Activated naive CD4-positive, alpha-beta T cell treated with anti-CD3 and anti-CD28 coated beads for 36 hours (primary cell): ENCODE measurements at regions of chr11 and their contacts with region 1.

Region 1: DNA sequence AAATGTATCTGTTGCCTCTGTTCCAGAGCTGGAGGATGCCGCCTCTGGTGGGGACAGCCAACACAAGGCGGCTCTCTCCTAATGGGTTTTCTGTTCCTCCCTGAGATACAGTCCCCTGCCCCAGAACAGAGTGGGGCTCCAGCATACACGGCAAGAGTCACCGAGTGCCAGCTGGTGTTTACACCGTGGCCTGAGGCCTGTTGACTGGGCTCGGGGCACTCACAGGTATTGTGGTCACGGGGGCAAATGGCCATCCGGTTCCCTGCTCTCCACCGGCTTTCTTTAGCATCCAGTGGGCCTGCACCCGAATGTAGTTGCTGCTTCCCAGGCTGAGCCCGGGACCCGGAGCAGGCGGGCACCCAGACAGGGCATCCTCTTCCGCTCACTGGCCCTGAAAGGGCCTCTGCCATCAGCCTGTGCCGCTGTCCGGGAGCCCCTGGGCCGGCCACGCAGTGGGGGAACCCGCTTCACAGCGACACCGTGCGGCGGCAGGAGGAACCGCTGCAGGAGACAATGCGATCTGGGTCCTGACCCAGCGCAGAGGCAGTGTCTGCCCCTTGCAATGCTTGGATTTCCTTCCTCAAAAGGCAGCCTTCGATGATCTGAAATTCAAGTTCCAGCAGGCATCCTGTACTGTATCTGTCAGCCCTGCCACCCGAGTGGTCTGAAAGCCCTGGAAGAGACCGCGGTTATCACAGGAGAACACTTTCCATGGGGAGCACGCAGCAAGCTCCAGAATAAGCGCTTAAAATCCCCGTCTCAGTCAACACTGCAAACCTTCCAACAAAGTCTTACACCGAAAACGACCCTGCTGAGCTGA is 859 bp upstream of the KRTAP5-5 start:
- DNase-seq: peak; percentile 65
- H3K4me3 Mint-ChIP-seq: no peak overlapping the region
- H3K27ac Mint-ChIP-seq: no peak overlapping the region
- H3K4me1 Mint-ChIP-seq: peaks cover 4% of the 10 kb centered on the region
- H3K27me3 Mint-ChIP-seq: peaks cover 21% of the 10 kb centered on the region

Region 2: GRCh38 chr11:1546536-1547400 is 81.9 kb before region 1 on chr11:
- CTCF ChIA-PET with region 1: interaction called, 7 read pairs
- intact Hi-C with region 1: loop called (anchors 2 kb)
- DNase-seq: peak; percentile 36
- H3K4me3 Mint-ChIP-seq: no peak overlapping the region
- H3K27ac Mint-ChIP-seq: no peak overlapping the region
- H3K4me1 Mint-ChIP-seq: peaks cover 4% of the 10 kb centered on the region
- H3K27me3 Mint-ChIP-seq: peaks cover 27% of the 10 kb centered on the region

Region 3: DNA sequence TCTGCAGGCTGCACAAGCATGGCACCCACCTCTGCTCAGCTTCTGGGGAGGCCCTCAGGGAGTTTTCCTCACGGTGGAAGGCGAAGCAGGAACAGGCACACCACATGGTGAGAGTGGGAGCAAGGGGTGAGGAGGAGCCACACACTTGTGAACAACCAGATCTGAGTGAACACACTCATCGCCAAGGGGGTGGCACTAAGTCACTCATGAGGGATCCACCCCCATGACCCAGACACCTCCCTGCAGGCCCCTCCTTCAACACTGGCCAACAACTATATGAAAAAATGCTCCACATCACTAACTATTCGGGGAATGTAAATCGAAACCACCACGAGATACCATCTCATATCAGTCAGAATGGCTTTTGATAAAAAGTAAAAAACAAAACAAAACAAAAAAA is 29.9 kb before region 1 on chr11:
- CTCF ChIA-PET with region 1: interaction called, 21 read pairs
- intact Hi-C with region 1: loop called (anchors 1 kb)
- DNase-seq: no peak
- H3K4me3 Mint-ChIP-seq: no peak overlapping the region
- H3K27ac Mint-ChIP-seq: no peak overlapping the region
- H3K4me1 Mint-ChIP-seq: peaks cover 5% of the 10 kb centered on the region
- H3K27me3 Mint-ChIP-seq: peaks cover 19% of the 10 kb centered on the region

Region 4: GRCh38 chr11:1640076-1640946 is 11.6 kb after region 1 on chr11:
- CTCF ChIA-PET with region 1: interaction called, 16 read pairs
- intact Hi-C with region 1: no loop called
- DNase-seq: no peak
- H3K4me3 Mint-ChIP-seq: no peak overlapping the region
- H3K27ac Mint-ChIP-seq: no peak overlapping the region
- H3K4me1 Mint-ChIP-seq: no peaks in the 10 kb centered on the region
- H3K27me3 Mint-ChIP-seq: peaks cover 8% of the 10 kb centered on the region

Region 5: DNA sequence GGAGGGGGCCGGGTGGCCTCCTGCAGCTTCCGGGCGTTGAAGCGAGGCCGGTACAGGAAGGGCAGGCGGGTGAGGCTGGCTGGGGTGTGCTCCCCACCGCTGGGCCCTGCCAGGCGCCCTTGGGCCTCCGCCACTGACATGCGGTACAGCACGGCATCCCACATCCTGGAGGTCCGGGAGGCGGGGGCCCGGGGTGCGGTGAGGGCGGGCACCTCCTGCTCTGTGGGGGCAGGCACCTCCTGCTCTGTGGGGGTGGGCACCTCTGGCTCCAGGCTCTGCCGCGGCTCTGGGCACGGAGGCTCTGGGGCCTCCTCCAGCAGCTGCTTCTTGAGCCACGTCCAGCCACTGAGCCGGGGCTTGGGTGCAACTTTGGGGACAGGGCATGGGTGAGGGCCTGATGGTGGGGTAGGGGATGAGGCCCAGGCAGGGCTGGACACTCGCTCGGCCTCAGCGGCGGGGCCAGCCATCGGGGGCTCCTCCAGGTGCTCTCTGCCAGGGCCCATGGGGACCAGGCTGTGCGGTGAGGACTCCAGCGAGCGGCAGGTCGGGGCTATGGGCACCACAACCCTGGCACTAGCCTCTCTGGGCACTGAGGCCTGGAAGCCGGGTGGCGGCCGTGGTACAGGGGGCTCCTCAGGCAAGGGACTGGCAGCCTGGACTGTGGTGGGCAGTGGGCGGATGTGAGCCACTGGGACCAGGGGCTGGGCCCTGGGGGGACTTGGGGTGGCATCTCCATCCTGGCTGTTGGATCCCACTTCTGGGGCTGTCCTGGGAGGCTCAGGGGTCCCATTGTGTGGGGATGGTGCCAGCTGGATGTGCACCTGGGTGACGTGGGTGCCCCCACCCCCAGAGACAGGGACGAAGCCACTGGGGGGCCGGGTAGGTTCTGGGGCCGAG is 260.8 kb after region 1 on chr11:
- CTCF ChIA-PET with region 1: no interaction called
- intact Hi-C with region 1: no loop called
- DNase-seq: peak; percentile 84
- H3K4me3 Mint-ChIP-seq: peak overlapping the region; percentile 79
- H3K27ac Mint-ChIP-seq: peak overlapping the region; percentile 71
- H3K4me1 Mint-ChIP-seq: peaks cover 23% of the 10 kb centered on the region
- H3K27me3 Mint-ChIP-seq: no peaks in the 10 kb centered on the region